GM10248 (cell line): ENCODE measurements at regions of chr2 and their contacts with region 1.

Region 1: GRCh38 chr2:96208143-96209010 is at the start of gene STARD7:
- DNase-seq: peak; percentile 98
- CTCF ChIP-seq: no peak

Region 2: DNA sequence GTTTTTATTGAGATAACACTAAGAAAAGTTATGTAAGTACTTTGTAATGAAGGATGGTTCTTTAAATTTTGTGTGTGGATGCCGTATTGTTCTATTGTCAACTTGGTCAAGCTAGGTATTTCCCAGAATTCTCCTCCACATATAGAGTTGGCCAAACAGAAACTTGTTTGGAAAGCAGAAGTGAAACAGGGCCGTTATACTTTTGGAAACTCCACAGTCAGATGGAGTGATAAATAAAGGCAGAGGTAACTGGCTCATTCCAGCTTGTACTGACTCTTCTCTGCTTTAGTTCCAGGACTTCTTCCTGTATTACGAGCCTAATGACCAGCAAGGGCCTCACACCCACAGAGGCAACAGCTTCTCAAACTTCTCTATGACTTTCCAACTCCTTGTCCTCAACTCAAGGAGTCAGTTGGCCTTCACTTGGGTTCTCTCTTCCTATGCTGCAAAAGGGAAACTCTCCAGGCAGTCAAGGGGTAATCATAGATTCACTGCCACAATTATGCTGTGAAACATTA is 16.7 kb after region 1 on chr2:
- CTCF ChIA-PET with region 1: interaction called, 11 read pairs
- POLR2A ChIA-PET with region 1: no interaction called
- DNase-seq: peak; percentile 50
- CTCF ChIP-seq: no peak

Region 3: DNA sequence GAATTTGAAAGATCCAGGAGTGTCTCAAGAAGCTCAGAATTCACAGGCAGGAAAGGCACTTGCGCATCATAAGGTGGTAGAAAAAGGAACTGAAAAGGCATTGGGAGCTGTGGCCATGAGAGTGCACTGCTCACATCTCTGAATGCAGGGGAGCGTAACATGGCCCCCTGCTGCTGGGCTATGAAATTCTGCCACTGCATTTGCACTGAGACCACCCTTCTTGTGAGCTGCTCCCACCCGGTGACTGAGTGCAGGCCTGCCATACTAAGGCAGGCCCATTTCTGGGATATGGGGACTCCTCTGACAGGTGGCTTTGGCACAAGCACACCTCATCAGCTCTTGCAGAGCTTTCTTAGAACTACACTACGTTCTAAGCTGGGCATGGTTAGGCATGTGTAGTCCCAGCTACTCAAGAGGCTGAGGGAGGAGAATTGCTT is 25.5 kb after region 1 on chr2:
- CTCF ChIA-PET with region 1: interaction called, 25 read pairs
- POLR2A ChIA-PET with region 1: interaction called, 7 read pairs
- DNase-seq: peak; percentile 70
- CTCF ChIP-seq: peak; percentile 45

Region 4: GRCh38 chr2:96773922-96774321 is 565.5 kb after region 1 on chr2:
- CTCF ChIA-PET with region 1: no interaction called
- POLR2A ChIA-PET with region 1: no interaction called
- DNase-seq: no peak
- CTCF ChIP-seq: no peak